PC-9 (cell line): ENCODE measurements at regions of chr17 and their contacts with region 1.

Region 1: DNA sequence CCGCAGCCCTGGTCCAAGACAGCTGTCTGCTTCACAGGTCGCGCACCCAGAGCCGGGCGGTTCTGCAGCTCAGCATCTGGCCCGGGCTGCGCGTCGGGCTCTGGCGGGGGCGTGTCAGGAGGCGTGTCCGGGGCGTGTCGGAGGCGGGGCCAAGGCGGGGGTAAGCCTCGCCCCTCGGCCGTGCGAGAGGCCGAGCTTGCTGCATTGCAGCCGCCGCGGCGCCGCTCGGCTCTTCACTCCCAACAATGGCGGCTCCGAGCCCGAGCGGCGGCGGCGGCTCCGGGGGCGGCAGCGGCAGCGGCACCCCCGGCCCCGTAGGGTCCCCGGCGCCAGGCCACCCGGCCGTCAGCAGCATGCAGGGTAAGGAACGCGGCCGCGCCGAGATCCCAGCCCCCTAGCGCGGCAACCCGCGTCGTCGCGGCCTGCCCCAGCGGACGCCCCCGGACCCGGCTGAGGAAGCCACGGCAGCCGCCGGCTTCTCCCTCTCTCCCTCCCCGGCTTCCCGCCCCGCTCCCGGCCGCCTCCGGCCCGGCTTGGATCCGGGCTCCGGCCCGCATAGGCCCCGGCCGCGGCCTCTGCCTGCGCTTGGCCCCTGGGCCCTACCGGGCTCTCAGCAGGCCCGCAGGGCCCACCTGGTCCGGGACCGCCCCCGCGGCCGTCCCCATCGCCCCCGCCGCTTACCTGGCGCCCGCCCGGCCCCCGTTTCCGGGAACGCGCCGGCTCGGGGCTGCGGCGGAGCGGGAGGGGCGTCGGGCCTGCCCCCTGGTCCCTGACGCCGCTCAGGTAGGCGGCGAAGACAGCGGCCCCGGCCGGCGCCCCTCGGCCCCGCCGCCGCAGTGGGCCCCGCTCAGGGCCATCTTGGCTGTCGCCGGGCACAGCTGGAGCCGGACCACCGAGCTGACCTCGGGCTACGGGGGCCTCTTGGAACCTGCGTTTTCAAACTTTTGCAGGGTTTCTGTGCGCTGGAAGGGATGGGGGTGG is at the start of gene MAP2K4:
- DNase-seq: peak; percentile 54 to 94
- H3K4me3 ChIP-seq: peak within 1 kb of the TSS; percentile 64
- H3K27ac ChIP-seq: no peak within 1 kb of the TSS; the same call in 1 of the 2 replicates
- H3K4me1 ChIP-seq: peaks cover 46% of the 10 kb centered on the region
- H3K27me3 ChIP-seq: 0 out of 2 replicates have a peak, but pooled peaks cover 2% of the 10 kb centered on the region
- CTCF ChIP-seq: no peak
- total RNA-seq, gene MAP2K4: 37.1 and 44.3 TPM in 2 replicates

Region 2: DNA sequence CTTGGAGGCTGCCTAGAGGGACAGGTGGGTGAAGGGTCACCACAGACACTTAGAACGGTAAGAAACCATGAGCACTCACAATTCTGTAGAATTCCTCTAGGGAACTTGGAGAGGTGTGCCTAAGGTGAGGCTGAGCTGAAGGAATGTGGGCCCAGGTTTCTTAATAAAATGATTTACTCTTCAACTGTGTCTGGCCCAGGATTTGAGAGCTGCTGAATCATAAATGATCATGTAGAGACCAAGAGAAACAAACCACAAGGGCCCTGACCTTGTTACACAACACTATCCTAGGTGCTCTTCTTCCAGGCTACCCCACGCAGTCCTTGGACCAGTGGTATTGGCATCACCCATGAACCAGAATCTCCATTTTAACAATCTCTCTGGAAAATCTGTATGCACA is 51.4 kb before region 1 on chr17:
- CTCF ChIA-PET with region 1: no interaction called
- POLR2A ChIA-PET with region 1: no interaction called
- intact Hi-C with region 1: loop called (anchors 2 kb)
- DNase-seq: no peak
- H3K4me3 ChIP-seq: no peak overlapping the region
- H3K27ac ChIP-seq: no peak overlapping the region
- H3K4me1 ChIP-seq: no peaks in the 10 kb centered on the region
- H3K27me3 ChIP-seq: no peaks in the 10 kb centered on the region
- CTCF ChIP-seq: no peak

Region 3: GRCh38 chr17:11980813-11981212 is 40.1 kb before region 1 on chr17:
- CTCF ChIA-PET with region 1: no interaction called
- POLR2A ChIA-PET with region 1: no interaction called
- intact Hi-C with region 1: no loop called
- DNase-seq: no peak
- H3K4me3 ChIP-seq: no peak overlapping the region
- H3K27ac ChIP-seq: no peak overlapping the region
- H3K4me1 ChIP-seq: no peaks in the 10 kb centered on the region
- H3K27me3 ChIP-seq: no peaks in the 10 kb centered on the region
- CTCF ChIP-seq: no peak; the same call in 1 of the 2 replicates

Region 4: DNA sequence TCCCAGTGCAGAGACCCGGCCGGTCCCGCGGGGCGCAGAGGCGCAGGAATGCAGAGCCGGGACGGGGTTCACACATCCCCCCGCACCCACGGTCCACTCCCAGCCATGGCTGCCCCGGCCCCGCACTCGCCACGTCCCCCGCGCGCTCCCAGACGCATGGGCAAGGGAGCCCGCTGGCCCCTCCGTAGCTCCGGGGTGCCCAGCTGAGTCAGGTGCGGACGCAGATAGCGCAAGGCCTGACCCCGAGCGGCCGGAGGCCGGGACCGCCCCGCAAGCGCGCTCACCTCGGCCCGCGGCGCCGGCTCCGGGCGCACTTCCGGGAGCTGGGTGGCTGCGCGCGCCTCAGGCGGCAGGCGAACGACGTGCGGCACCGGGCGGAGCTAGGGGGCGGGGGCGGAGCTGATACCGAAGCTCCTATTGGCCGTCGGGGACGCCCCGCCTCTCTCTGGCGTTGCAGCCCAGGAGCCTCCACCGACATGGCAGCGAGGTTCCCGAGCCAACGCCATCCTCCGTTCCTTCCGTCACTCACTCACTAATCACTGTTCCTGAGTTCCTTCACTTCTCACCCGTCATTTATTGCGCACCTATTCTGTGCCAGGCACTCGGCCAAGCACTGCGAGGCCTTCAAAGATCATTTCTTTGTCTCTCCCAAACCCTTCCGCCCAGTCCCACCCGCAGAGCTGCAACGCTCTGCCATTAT is 23.6 kb before region 1 on chr17 and contains the start of gene ZNF18:
- CTCF ChIA-PET with region 1: interaction called, 3 read pairs
- POLR2A ChIA-PET with region 1: interaction called, 14 read pairs
- intact Hi-C with region 1: loop called (anchors 1 kb)
- DNase-seq: peak; percentile 75 to 98
- H3K4me3 ChIP-seq: peak within 1 kb of the TSS; percentile 90
- H3K27ac ChIP-seq: 0 out of 2 replicates have a peak within 1 kb of the TSS, but pooled peaks have one; percentile 24
- H3K4me1 ChIP-seq: no peaks in the 10 kb centered on the region; the same call in 1 of the 2 replicates
- H3K27me3 ChIP-seq: no peaks in the 10 kb centered on the region
- CTCF ChIP-seq: no peak
- total RNA-seq, gene ZNF18: 6.3 and 7.0 TPM in 2 replicates

Region 5: DNA sequence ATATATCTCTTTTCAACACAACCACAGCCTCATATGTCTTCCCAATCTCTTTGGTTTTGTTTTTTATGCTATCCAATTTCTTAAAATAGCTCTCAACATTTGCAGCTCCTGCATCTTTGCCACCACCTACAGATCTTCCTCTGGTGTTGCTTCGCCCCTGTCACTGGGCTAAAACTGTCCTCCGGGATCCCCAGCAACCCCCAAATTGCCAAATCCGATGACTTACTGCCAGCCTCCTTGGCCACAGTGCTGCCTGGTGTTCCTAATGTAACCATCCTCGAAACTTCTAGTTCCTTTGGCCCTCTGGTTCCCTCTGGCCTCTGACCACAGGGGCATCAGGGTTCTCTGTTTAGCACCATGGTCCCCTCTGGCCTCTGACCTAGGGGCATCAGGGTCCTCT is 926.1 kb after region 1 on chr17:
- CTCF ChIA-PET with region 1: interaction called, 10 read pairs
- POLR2A ChIA-PET with region 1: no interaction called
- intact Hi-C with region 1: no loop called
- DNase-seq: no peak
- H3K4me3 ChIP-seq: no peak overlapping the region
- H3K27ac ChIP-seq: no peak overlapping the region
- H3K4me1 ChIP-seq: no peaks in the 10 kb centered on the region
- H3K27me3 ChIP-seq: peaks cover 74% of the 10 kb centered on the region
- CTCF ChIP-seq: no peak